Panc1 (cell line): ENCODE measurements at regions of chr5 and their contacts with region 1.

Region 1: DNA sequence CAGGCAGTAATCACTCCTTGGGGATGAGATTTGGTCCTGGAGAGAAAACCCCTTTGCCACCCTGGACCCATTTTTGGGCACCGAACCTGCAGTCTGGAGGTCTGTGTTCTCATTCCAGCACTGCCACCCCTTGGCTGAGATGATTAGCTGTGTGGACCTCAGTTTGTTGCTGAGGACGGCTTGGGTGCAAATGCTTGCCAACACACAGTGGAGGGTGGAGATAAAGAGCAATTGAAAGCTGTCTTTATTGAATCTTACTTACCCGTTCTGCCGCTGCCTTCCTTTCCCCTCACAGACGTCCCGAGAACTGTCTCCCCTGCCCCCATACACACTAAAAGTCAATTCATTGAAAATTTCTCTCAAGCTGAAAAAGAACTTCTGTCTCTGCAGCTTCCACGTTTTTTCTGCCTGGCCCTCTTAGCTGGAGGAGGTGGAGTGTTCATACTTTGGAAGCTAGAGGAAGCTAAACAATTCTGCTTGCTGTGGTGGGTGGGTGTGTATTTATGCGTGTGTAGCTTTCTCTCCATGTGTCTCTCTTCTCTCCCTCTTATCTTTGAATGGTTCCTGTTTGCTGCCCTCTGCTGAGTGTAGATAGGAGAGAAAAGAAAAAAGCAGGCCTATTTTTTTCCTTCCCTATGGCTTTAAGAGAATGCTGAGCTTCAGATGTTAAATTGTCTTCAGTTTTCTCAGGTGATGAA is 6.6 kb downstream of the GALNT10 start:
- DNase-seq: no peak
- ATAC-seq: no peak
- H3K4me3 ChIP-seq: no peak overlapping the region
- H3K27ac ChIP-seq: no peak overlapping the region; the same call in 1 of the 2 replicates
- H3K4me1 ChIP-seq: peaks cover 19% of the 10 kb centered on the region
- H3K27me3 ChIP-seq: no peaks in the 10 kb centered on the region
- CTCF ChIP-seq: peak; percentile 59; the same call in 1 of the 2 replicates

Region 2: GRCh38 chr5:153926201-153926600 is 270.9 kb before region 1 on chr5:
- CTCF ChIA-PET with region 1: no interaction called
- POLR2A ChIA-PET with region 1: no interaction called
- in situ Hi-C with region 1: no loop called
- intact Hi-C with region 1: no loop called
- DNase-seq: no peak
- ATAC-seq: no peak
- H3K4me3 ChIP-seq: no peak overlapping the region
- H3K27ac ChIP-seq: no peak overlapping the region
- H3K4me1 ChIP-seq: no peaks in the 10 kb centered on the region
- H3K27me3 ChIP-seq: no peaks in the 10 kb centered on the region
- CTCF ChIP-seq: no peak

Region 3: DNA sequence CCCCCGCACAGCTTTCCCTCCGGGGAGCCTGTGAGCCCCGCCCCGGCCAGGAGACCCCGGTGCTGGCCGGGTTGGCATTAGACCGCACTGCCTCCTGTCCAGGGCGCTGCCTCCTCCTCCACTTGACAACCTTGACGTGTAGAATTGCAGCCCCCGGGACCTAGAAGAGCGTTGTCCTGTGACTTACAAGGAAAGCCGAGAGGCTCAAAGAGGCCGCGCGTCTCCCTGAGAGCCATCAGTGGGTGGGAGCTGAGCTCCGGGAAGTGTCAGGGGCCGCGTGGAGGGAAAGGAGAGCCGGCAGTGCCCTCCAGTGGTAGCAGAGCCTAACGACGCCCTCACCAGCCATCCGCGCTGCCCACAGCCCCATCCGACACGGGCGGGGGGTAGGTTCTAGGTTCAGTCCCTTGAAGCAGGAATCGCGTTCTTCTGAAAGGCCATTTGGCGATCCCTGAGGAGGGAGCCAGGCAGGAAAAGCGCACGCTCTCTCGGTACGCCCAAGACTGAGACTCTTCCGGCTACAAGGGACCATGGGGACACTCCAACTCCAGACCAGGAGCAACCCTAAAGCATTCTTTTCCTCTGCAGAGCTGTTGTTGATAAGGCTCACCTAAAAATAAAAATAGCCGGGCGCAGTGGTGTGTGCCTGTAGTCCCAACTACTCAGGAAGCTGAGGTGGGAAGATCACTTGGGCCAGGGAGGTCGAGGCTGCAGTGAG is 208.1 kb after region 1 on chr5:
- CTCF ChIA-PET with region 1: interaction called, 6 read pairs
- POLR2A ChIA-PET with region 1: no interaction called
- in situ Hi-C with region 1: no loop called
- intact Hi-C with region 1: loop called (anchors 5 kb)
- DNase-seq: peak; percentile 30
- ATAC-seq: peak; percentile 96
- H3K4me3 ChIP-seq: peak overlapping the region; percentile 8 to 42; a peak in 3 of 4 replicates
- H3K27ac ChIP-seq: no peak overlapping the region
- H3K4me1 ChIP-seq: no peaks in the 10 kb centered on the region
- H3K27me3 ChIP-seq: no peaks in the 10 kb centered on the region
- CTCF ChIP-seq: peak; percentile 91